Posterior vena cava (tissue), 2 donors: ENCODE measurements at regions of chr15 and their contacts with region 1.

Region 1: GRCh38 chr15:66747886-66748707 is 46.1 kb downstream of the SMAD6 start:
- DNase-seq: no peak

Region 2: GRCh38 chr15:65212097-65212496 is 1536.0 kb before region 1 on chr15:
- intact Hi-C with region 1: no loop called
- DNase-seq: no peak

Region 3: DNA sequence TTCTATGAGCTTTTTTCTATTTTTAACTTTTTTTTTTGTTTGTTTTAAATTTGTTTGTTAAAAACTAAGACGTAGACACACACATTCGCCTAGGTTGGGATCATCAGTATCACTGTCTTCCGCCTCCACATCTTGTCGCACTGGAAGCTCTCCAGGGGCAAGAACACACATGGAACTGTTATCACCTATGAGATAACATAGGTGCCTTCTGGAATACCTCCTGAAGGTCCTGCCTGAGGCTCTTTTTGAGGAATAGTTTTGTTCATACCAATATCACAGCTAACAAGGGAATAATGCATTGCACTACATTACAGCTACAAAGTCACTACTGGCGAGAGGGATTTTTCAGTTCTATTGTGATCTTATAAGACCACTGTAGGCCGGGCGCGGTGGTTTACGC is 213.1 kb before region 1 on chr15:
- intact Hi-C with region 1: no loop called
- DNase-seq: no peak

Region 4: DNA sequence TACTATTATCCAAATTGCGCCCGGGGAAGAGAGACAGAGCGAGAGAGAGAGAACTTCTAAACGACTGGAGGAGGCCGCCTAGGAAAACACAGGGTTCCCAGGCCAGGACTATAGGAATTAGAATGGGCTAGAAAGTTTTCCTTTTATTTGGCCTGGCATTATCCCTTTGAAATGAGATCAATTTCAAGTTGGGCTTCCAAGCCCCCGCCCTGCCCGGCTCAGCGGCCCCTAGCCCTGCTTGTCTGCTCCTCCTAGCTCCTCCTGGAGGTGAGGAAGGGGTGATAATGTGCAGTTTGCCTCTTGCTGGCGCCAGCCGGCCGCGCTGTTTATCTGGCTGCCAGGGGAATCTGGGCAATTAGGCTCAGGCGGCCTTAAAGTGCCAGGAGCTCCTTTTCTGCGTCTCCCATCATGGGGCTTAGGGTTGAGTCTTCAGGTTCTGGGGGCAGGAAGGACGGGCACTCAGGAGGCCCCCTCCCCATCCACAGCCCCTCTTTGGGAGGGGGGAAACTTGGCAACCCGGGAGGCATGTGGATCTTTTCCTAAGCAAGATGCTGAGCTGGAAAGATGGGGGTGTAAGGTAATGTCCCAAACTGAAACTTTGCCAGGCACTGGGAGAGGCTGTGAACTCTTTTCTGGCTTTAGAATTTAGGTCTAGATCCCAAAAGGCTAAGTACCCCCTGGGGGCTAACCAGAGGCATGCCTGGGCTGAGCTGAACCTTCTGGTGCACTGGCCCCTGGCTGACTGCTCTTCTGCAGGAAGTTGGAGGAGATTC is 40.6 kb before region 1 on chr15:
- intact Hi-C with region 1: loop called in 1 of 2 experiments (anchors 1 kb)
- DNase-seq: no peak